ENCODE measurements at regions of chr1 and their contacts with region 1.

Region 1: DNA sequence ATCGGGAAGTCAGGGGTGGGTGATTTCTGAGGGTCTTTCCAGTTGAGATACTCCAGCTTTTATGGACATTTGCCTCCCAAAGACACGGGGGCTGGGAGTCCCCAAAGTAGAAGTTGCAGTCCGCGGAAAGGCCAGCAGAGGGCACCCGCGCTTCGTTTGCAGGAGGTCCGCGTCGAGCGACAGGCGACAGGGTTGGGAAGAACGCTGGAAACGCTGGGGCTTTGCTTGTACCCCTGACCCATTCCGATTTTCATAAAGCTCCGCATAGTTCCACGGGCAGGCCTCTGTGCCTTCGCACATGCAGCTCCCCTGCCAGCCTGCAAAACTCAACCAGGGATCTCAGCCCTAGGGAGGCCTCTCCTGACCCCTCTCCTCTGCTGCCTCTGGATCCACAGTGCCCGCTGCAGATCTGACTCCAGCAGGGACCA is 44.2 kb upstream of the LAPTM5 start:
- DNase-seq: peak; percentile 60 to 79
- H3K4me3 ChIP-seq: no peak overlapping the region
- H3K4me3 Mint-ChIP-seq: no peak overlapping the region
- H3K27ac Mint-ChIP-seq: no peak overlapping the region
- H3K4me1 ChIP-seq: no peaks in the 10 kb centered on the region
- H3K4me1 Mint-ChIP-seq: no peaks in the 10 kb centered on the region
- H3K27me3 ChIP-seq: no peaks in the 10 kb centered on the region
- H3K27me3 Mint-ChIP-seq: no peaks in the 10 kb centered on the region
- CTCF ChIP-seq: peak; percentile 74

Region 2: DNA sequence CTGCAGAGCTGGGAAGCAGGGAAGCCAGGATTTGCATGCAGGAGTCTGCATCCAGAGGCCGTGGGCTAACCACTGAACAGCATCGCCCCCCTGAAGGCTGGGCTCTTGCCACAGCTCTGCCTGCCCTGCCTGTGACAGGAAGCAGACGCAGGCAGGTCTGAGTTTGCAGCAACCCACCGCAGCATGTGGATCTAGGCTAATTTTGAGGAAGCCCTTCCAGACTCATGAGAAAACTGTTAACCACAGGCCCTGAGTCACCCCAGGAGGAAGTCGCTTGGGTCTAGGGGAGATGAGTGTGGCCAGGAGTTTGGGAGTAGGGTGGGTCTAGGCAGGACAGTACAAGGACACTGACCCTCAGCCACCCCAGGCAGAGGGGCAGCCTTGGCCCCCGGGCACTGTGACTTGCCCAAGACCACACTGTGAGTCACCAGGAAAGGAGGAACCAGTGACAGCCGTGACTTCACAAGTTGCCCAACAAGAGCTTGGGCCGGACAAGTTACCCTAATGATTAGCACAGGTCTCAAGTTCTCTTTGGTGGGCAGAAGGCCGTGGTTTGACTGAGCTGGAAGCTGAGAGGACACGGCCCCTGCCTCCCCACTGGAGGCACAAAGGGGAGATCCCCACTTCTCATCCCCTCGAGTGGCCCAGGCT is 45.1 kb before region 1 on chr1:
- CTCF ChIA-PET with region 1: no interaction called
- POLR2A ChIA-PET with region 1: no interaction called
- intact Hi-C with region 1: no loop called
- DNase-seq: no peak
- H3K4me3 ChIP-seq: no peak overlapping the region
- H3K4me3 Mint-ChIP-seq: no peak overlapping the region
- H3K27ac Mint-ChIP-seq: no peak overlapping the region
- H3K4me1 ChIP-seq: no peaks in the 10 kb centered on the region
- H3K4me1 Mint-ChIP-seq: no peaks in the 10 kb centered on the region
- H3K27me3 ChIP-seq: no peaks in the 10 kb centered on the region
- H3K27me3 Mint-ChIP-seq: no peaks in the 10 kb centered on the region
- CTCF ChIP-seq: no peak

Region 3: GRCh38 chr1:30852026-30852425 is 50.2 kb after region 1 on chr1:
- CTCF ChIA-PET with region 1: no interaction called
- POLR2A ChIA-PET with region 1: no interaction called
- intact Hi-C with region 1: loop called (anchors 5 kb)
- DNase-seq: no peak
- H3K4me3 ChIP-seq: no peak overlapping the region
- H3K4me3 Mint-ChIP-seq: no peak overlapping the region
- H3K27ac Mint-ChIP-seq: no peak overlapping the region
- H3K4me1 ChIP-seq: no peaks in the 10 kb centered on the region
- H3K4me1 Mint-ChIP-seq: no peaks in the 10 kb centered on the region
- H3K27me3 ChIP-seq: no peaks in the 10 kb centered on the region
- H3K27me3 Mint-ChIP-seq: peaks cover 6% of the 10 kb centered on the region
- CTCF ChIP-seq: no peak

Region 4: GRCh38 chr1:30929135-30929889 is 127.5 kb after region 1 on chr1:
- CTCF ChIA-PET with region 1: no interaction called
- POLR2A ChIA-PET with region 1: no interaction called
- intact Hi-C with region 1: loop called (anchors 5 kb)
- DNase-seq: peak in 1 of 2 experiments; percentile 48
- H3K4me3 ChIP-seq: no peak overlapping the region
- H3K4me3 Mint-ChIP-seq: no peak overlapping the region
- H3K27ac Mint-ChIP-seq: no peak overlapping the region
- H3K4me1 ChIP-seq: no peaks in the 10 kb centered on the region
- H3K4me1 Mint-ChIP-seq: no peaks in the 10 kb centered on the region
- H3K27me3 ChIP-seq: no peaks in the 10 kb centered on the region
- H3K27me3 Mint-ChIP-seq: no peaks in the 10 kb centered on the region
- CTCF ChIP-seq: peak; percentile 50 to 52